ENCODE measurements at regions of chr1 and their contacts with region 1.

Region 1: GRCh38 chr1:32716312-32717148 is 14.0 kb upstream of the SYNC start:
- DNase-seq: peak; percentile 74
- ATAC-seq: peak; percentile 71
- H3K4me3 Mint-ChIP-seq: no peak overlapping the region
- H3K27ac Mint-ChIP-seq: no peak overlapping the region
- H3K4me1 Mint-ChIP-seq: peaks cover 18% of the 10 kb centered on the region
- H3K27me3 Mint-ChIP-seq: peaks cover 6% of the 10 kb centered on the region

Region 2: DNA sequence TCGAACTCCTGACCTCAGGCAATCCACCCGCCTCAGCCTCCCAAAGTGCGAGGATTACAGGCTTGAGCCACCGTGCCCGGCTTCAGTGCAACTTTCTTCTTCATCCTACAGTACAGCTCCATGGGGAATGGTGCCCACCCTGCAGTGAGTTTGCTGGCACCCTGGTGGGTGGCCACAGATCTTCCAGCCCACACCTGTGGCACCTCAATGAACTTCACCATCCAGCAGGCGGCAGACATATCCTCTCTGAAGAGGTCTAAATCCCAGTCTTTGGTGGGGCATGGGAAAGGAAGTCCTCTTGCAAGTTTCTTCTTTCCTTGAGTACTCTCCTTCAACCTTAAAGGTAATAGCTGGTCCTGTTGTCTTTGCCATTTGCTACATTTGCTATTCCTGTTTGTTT is 195.4 kb before region 1 on chr1:
- CTCF ChIA-PET with region 1: interaction called, 12 read pairs
- POLR2A ChIA-PET with region 1: no interaction called
- DNase-seq: no peak
- ATAC-seq: no peak
- H3K4me3 Mint-ChIP-seq: peak overlapping the region; percentile 72
- H3K27ac Mint-ChIP-seq: no peak overlapping the region
- H3K4me1 Mint-ChIP-seq: peaks cover 3% of the 10 kb centered on the region
- H3K27me3 Mint-ChIP-seq: peaks cover 5% of the 10 kb centered on the region

Region 3: DNA sequence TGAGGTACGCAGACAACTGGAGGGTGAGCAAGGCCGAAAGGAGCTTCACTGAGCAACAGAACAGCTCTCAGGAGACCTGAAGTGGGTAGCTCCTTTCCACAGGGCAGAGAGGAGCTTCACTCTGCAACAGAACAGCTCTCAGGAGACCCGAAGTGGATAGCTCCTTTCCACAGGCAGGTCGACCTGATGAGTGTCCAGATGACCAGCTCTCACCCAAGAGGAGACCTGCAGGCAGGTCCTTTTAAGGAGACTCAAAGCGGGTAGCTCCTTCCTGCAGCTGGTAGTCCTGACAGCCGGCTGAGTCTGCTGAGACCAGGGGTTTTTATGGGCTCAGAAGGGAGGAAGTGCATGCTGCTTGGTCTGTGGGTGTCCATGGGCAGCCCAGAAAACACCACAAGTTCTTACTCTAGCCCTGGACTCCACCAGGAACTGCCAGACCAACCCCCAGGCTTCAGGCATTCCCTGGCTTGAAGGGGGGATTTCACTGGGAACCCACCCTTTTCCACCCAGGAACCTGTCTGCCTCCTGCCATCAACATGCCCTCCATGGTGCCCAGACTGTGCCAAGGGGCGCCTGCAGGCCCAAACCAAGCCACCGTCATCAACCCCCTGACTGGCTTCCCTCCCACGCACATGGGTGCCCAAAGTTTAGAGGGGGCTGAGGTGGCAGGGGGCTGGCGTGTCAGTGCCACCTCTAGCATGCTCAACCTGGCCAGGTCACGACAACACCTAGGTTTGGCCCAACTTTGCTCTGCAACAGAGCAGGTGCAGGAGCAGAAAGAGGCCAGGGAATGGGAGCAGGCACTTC is 109.8 kb before region 1 on chr1:
- CTCF ChIA-PET with region 1: no interaction called
- POLR2A ChIA-PET with region 1: no interaction called
- DNase-seq: no peak
- ATAC-seq: no peak
- H3K4me3 Mint-ChIP-seq: no peak overlapping the region
- H3K27ac Mint-ChIP-seq: no peak overlapping the region
- H3K4me1 Mint-ChIP-seq: no peaks in the 10 kb centered on the region
- H3K27me3 Mint-ChIP-seq: no peaks in the 10 kb centered on the region

Region 4: DNA sequence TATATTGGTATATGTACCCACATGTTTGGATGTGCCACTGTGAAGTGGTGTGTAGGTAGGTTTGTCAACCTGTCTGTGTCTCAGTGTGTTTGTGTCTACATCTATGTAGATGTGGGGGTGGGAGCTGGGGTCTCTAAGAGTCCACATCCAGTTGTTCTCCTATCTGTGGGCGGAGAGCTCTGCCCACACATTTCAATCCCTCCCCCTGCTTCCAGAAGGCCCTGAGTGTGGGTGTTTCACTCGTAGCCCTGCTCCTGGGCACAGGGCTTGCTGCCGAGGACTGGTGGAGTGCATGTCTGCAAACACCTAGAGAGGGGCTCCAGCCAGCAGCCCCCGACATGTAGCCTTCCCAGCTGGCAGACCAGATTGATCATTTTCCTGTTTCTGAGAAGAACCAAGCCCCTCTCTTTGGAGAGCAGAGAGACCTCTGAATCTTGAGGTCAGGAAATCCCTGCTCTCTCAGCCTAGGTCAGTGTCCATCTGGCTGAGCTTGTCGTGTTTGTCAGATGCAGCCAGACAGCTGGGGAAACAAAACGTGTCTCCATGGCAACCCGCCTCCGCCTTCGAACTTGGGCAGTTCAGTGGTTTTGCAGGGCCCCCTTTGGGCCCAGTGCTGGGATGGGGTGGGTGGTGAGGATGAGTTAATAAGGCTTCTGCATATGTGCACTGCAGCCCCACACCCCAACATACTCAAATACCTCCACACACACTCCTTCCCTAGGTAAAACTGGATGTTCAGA is 17.2 kb after region 1 on chr1:
- CTCF ChIA-PET with region 1: interaction called, 29 read pairs
- POLR2A ChIA-PET with region 1: no interaction called
- DNase-seq: no peak
- ATAC-seq: no peak
- H3K4me3 Mint-ChIP-seq: no peak overlapping the region
- H3K27ac Mint-ChIP-seq: no peak overlapping the region
- H3K4me1 Mint-ChIP-seq: peaks cover 4% of the 10 kb centered on the region
- H3K27me3 Mint-ChIP-seq: peaks cover 2% of the 10 kb centered on the region

Region 5: GRCh38 chr1:32753532-32754312 is 37.2 kb after region 1 on chr1:
- CTCF ChIA-PET with region 1: interaction called, 22 read pairs
- POLR2A ChIA-PET with region 1: no interaction called
- DNase-seq: peak; percentile 47
- ATAC-seq: peak; percentile 92
- H3K4me3 Mint-ChIP-seq: peak overlapping the region; percentile 29
- H3K27ac Mint-ChIP-seq: no peak overlapping the region
- H3K4me1 Mint-ChIP-seq: peaks cover 5% of the 10 kb centered on the region
- H3K27me3 Mint-ChIP-seq: peaks cover 37% of the 10 kb centered on the region

Region 6: DNA sequence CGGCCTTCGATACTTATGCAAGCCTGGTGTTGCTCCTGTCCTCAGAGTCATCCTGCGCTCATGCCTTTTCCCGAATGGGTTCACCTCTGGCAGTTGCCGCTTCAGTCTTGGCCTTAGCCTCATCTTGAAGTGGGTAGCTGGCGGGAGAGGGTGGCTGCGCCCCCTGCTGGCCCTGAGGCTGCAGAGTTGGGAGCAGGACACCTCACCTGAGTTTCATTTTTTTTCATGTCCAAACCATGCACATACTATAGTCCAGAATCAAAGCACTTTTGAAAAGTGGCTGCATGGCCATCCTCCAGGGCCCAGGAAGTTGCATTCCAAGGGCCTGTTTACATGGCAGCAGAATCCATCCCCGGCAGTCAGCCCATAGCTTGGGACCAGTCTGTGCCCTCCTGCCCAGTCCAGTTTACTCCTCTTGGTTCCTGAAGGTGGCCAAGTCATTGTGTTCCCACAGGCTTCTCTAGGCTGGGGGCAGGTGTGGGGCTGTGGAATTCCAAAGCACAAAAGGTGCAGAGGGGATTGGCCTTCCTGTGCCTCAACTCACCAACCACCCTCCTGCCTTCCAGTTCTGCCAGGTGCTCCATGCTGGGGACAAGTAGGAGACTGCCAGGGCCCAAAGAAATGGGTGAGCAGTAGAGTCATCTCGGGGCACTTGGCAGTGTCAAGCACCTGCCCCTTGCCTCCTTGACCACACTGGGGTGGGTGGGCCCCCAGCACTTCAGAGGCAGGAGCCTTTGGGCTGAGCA is 56.7 kb after region 1 on chr1:
- CTCF ChIA-PET with region 1: interaction called, 142 read pairs
- POLR2A ChIA-PET with region 1: interaction called, 9 read pairs
- DNase-seq: peak; percentile 80
- ATAC-seq: peak; percentile 80
- H3K4me3 Mint-ChIP-seq: no peak overlapping the region
- H3K27ac Mint-ChIP-seq: no peak overlapping the region
- H3K4me1 Mint-ChIP-seq: peaks cover 21% of the 10 kb centered on the region
- H3K27me3 Mint-ChIP-seq: no peaks in the 10 kb centered on the region

Region 7: GRCh38 chr1:33014464-33015163 is 298.1 kb after region 1 on chr1:
- CTCF ChIA-PET with region 1: no interaction called
- POLR2A ChIA-PET with region 1: no interaction called
- DNase-seq: no peak
- ATAC-seq: no peak
- H3K4me3 Mint-ChIP-seq: no peak overlapping the region
- H3K27ac Mint-ChIP-seq: no peak overlapping the region
- H3K4me1 Mint-ChIP-seq: peaks cover 3% of the 10 kb centered on the region
- H3K27me3 Mint-ChIP-seq: no peaks in the 10 kb centered on the region